Dorsolateral prefrontal cortex (tissue), 120 donors: ENCODE measurements at regions of chr6 and their contacts with region 1.

Region 1: GRCh38 chr6:39686976-39687375 is 38.2 kb downstream of the KIF6 start:
- DNase-seq: peak in 8 of 10 donors; percentile 50 to 86 (median 62)
- H3K4me3 ChIP-seq: peak overlapping the region in 17 of 59 donors; percentile 1 to 38 (median 17)
- H3K27ac ChIP-seq: peak overlapping the region; percentile 66 to 99 (median 94)
- H3K27me3 ChIP-seq: no peaks in the 10 kb centered on the region
- CTCF ChIP-seq: peak in 12 of 56 donors; percentile 8 to 50 (median 20)

Region 2: DNA sequence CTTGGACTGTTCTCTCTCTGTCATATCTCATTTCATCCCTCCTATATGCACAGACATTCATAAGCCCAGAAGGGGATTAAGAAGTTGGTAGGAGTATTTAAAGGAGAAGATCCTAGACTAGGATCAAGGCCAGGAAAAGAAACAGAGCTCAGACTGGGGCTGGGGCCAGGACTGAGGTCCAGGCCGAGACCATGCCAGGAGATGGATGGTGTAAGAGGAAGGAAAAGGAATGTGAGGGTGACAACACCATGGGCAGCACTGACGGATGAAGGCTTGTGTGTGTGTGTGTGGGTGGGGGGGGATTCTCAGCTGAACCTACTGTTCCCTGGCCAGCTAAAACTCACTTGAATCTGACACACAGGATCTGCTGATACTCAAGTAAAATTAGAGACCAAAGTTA is 143.9 kb before region 1 on chr6:
- intact Hi-C with region 1: no loop called
- DNase-seq: no peak
- H3K4me3 ChIP-seq: no peak overlapping the region
- H3K27ac ChIP-seq: no peak overlapping the region
- H3K27me3 ChIP-seq: no peaks in the 10 kb centered on the region
- CTCF ChIP-seq: no peak

Region 3: DNA sequence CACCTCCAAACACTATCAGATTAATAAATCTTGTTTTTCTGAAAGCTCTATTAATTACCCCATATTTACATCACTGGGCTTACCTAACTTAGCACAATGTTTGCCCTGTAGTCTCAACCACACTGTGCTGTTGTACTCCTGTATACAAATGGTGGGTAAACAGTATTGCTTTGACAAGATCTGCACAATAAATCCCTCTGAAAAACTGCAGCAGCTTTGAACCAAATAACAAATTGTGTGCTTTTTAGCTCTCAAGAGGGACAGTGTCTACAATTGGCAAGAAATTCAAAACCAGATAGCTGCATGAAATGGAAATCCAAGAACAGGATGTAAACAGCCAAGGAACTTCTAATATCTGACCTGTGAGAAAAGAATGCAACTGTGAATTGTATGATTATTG is 27.8 kb after region 1 on chr6:
- intact Hi-C with region 1: loop called (anchors 2 kb)
- DNase-seq: no peak
- H3K4me3 ChIP-seq: peak overlapping the region in 45 of 59 donors; percentile 3 to 57 (median 35)
- H3K27ac ChIP-seq: peak overlapping the region; percentile 42 to 99 (median 95)
- H3K27me3 ChIP-seq: no peaks in the 10 kb centered on the region
- CTCF ChIP-seq: peak in 1 of 56 donors; percentile 7